Psoas muscle (tissue), 8 donors: ENCODE measurements at regions of chr15 and their contacts with region 1.

Region 1: DNA sequence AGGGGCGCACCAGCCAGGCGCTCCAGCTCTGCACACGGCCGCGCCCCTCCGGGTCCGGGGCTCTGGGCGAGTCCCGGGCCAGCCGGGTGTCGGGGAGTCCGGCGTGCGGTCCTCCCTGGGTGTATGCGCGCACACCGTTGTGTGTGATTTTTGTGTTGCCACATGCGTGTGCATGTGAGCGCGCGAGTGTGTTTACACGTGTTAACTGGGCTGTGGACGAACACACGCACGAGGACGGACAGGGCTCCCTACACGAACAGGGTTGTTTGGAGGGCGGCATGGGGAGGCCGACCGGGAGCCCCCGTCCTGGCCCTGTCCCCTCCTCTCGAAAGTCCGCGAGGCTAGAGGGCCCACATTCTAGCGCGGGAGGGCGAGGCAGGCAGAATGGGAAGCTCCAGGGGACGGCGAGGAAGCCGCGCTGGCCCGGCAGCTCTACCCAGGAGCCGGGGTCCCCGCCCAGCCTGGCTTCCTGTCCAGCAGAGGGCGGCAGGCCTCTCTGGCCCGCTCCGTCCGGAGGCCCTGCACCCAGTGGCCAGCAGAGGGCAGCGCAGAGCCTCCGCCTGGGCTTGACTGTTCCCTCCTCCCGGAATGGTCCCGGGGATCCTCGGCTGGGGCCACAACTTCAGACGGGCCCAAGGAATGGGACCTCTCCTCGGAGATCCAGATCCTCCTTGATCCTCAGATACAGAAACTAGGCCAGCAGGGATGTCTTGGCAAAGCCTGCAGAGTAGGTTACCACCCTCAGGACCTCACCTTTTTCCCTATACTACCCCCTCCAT is 611 bp upstream of the LINGO1 start:
- DNase-seq: peak; percentile 91 to 93
- ATAC-seq: peak; percentile 96 to 98 (median 97)
- H3K4me3 ChIP-seq: peak overlapping the region; percentile 65
- H3K27ac ChIP-seq: no peak overlapping the region
- H3K4me1 ChIP-seq: peaks cover 4% of the 10 kb centered on the region
- H3K27me3 ChIP-seq: peaks cover 0 to 60% (median 12%) of the 10 kb centered on the region in 3 donors
- CTCF ChIP-seq: peak; percentile 100

Region 2: DNA sequence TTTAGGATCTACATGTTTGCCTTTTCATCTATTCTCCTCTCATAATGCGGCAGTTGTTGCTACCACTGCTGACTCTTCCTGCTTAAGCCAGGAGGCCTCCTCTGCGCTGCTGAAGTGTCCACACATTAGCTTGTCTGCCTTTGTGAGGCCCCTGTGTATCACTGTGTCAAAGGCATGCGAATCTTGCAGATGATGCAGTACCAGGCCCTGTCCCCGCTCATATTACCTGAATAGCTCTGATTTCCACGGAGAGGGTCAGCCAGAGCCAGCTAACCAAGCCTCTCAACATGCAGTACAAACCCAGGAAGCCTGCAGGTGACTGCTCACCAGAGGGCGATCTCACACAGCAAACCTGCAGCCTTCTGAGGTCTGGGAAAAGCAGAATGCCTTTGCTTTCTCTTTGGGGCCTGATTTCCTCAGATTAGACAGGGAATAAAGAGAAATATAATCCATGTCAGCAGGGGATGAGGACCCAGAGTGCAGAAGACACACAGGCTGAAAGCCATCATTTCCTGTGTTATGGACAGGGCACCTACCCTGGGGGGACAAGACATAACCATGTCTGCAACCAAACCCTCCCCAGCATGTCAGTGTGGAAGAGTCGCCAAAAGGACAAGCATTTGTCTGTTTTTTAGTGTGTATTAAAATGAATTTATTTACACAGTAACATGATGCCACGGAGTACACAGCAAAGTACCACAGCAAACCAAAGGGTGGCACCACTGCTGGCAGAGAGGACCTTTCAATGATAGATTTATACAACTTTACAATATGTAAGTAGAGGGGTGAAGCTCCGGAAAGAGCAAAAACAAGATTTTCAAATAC is 525.6 kb before region 1 on chr15:
- intact Hi-C with region 1: loop called in 1 of 2 experiments (anchors 10 kb)
- DNase-seq: peak; percentile 47 to 73
- ATAC-seq: peak; percentile 85 to 94 (median 92)
- H3K4me3 ChIP-seq: no peak overlapping the region
- H3K27ac ChIP-seq: peak overlapping the region; percentile 56
- H3K4me1 ChIP-seq: peaks cover 22% of the 10 kb centered on the region
- H3K27me3 ChIP-seq: no peaks in the 10 kb centered on the region
- CTCF ChIP-seq: peak; percentile 73